ENCODE measurements at regions of chr11 and their contacts with region 1.

Region 1: GRCh38 chr11:64553551-64554201 is 37.3 kb upstream of the SLC22A12 start:
- DNase-seq: no peak
- H3K4me3 ChIP-seq: no peak overlapping the region
- H3K27ac ChIP-seq: peak overlapping the region; percentile 72 to 78
- H3K4me1 ChIP-seq: peaks cover 11 to 20% of the 10 kb centered on the region in 2 donors
- H3K27me3 ChIP-seq: no peaks in the 10 kb centered on the region
- CTCF ChIP-seq: peak; percentile 93 to 98 (median 94)

Region 2: GRCh38 chr11:64723117-64723906 is 169.6 kb after region 1 on chr11 and contains the start of gene NRXN2:
- intact Hi-C with region 1: loop called (anchors 1 kb)
- DNase-seq: peak in 1 of 2 donors; percentile 85
- H3K4me3 ChIP-seq: peak within 1 kb of the TSS; percentile 70 to 82
- H3K27ac ChIP-seq: peak within 1 kb of the TSS; percentile 36 to 61
- H3K4me1 ChIP-seq: peaks cover 0 to 7% of the 10 kb centered on the region in 2 donors
- H3K27me3 ChIP-seq: no peaks in the 10 kb centered on the region
- CTCF ChIP-seq: peak; percentile 94 to 100 (median 96)
- total RNA-seq, gene NRXN2: 26.0 TPM

Measured in ascending aorta (tissue), 2 donors.